ENCODE measurements at regions of chr3 and their contacts with region 1.

Region 1: GRCh38 chr3:45123030-45123429 is 23.1 kb downstream of the CDCP1 start:
- DNase-seq: peak; percentile 94
- H3K4me3 ChIP-seq: no peak overlapping the region
- H3K27ac ChIP-seq: peak overlapping the region; percentile 97
- H3K4me1 ChIP-seq: peaks cover 87% of the 10 kb centered on the region
- H3K27me3 ChIP-seq: no peaks in the 10 kb centered on the region
- CTCF ChIP-seq: no peak

Region 2: DNA sequence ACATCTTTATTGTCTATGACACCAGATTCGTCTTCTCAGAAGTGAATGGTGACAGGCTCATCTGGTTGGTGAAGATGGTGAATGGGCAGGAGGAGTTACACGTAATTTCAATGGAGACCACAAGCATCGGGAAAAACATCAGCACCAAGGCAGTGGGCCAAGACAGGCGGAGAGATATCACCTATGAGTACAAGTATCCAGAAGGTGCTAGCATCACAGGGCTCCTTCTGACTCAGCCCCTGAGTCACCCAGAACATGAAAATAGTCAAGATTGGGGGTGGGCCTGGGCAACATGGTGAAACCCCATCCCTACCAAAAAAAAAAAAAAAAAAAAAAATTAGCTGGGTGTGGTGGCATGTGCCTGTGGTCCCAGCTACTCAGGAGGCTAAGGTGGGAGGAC is 216.0 kb before region 1 on chr3:
- CTCF ChIA-PET with region 1: no interaction called
- dilution Hi-C with region 1: no loop called
- in situ Hi-C with region 1: no loop called
- intact Hi-C with region 1: no loop called
- DNase-seq: peak; percentile 92
- H3K4me3 ChIP-seq: no peak overlapping the region
- H3K27ac ChIP-seq: no peak overlapping the region
- H3K4me1 ChIP-seq: peaks cover 19% of the 10 kb centered on the region
- H3K27me3 ChIP-seq: no peaks in the 10 kb centered on the region
- CTCF ChIP-seq: no peak

Region 3: GRCh38 chr3:44995142-44995770 is 127.8 kb before region 1 on chr3:
- CTCF ChIA-PET with region 1: no interaction called
- dilution Hi-C with region 1: no loop called
- in situ Hi-C with region 1: no loop called
- intact Hi-C with region 1: no loop called
- DNase-seq: no peak
- H3K4me3 ChIP-seq: no peak overlapping the region
- H3K27ac ChIP-seq: peak overlapping the region; percentile 13
- H3K4me1 ChIP-seq: peaks cover 49% of the 10 kb centered on the region
- H3K27me3 ChIP-seq: no peaks in the 10 kb centered on the region
- CTCF ChIP-seq: no peak

Region 4: DNA sequence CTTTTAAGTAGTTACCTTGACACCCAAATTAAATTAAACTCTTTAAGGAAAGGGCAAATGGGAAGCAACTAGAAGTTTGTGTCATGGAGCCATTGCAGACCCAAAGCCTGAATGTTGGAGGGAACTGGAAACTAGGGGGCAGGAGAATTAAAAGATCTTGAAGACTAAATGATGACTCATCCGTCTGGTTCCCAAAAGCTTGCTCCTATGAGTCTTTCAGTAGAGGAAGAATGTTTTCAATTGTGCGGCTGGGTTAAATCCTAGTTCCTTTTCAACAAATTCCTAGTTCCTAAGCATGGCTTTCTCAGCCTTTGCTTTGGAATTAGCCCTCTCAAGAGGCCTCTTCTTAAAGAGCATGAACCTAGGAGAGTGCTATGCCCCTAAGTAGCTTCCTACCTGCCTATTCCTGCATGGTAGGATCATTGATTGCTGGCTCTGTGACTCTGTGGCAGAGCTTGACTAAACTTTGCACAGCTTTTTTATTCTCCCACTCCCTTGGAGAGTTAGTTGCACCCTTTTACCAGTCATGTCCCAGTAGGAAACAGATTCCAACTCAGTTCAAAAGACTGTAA is 79.2 kb before region 1 on chr3:
- CTCF ChIA-PET with region 1: interaction called, 10 read pairs
- dilution Hi-C with region 1: no loop called
- in situ Hi-C with region 1: no loop called
- intact Hi-C with region 1: loop called (anchors 5 kb)
- DNase-seq: peak; percentile 68
- H3K4me3 ChIP-seq: no peak overlapping the region
- H3K27ac ChIP-seq: no peak overlapping the region
- H3K4me1 ChIP-seq: peaks cover 13% of the 10 kb centered on the region
- H3K27me3 ChIP-seq: no peaks in the 10 kb centered on the region
- CTCF ChIP-seq: peak in 1 of 2 donors; percentile 19

Region 5: DNA sequence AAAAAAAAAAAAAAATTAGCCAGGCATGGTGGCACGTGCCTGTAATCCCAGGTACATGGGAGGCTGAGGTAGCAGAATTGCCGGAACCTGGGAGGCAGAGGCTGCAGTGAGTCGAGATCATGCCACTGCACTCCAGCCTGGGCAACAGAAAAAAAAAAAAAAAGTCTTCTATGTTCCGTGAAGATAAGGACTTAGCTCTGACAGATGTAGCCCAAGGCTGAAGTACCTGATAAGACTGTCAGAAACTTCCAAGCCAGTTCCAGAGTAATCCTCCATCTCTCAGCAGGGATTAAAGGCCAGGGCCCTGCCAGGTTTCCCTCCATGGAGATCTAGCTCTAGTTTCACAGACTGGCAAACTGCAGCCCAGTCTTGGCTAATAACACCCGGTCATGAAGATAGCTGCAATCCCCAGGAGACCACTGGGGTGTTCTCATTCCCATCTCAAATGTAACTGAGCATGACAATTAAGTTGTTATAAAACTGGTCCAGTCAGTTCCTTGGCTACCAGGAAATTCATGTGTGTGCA is 14.7 kb after region 1 on chr3:
- CTCF ChIA-PET with region 1: interaction called, 3 read pairs
- dilution Hi-C with region 1: no loop called
- in situ Hi-C with region 1: no loop called
- intact Hi-C with region 1: loop called (anchors 1 kb)
- DNase-seq: no peak
- H3K4me3 ChIP-seq: no peak overlapping the region
- H3K27ac ChIP-seq: peak overlapping the region; percentile 82
- H3K4me1 ChIP-seq: peaks cover 89% of the 10 kb centered on the region
- H3K27me3 ChIP-seq: no peaks in the 10 kb centered on the region
- CTCF ChIP-seq: no peak

Region 6: GRCh38 chr3:45154641-45155147 is 31.7 kb after region 1 on chr3:
- CTCF ChIA-PET with region 1: interaction called, 3 read pairs
- dilution Hi-C with region 1: loop called (anchors 5 kb)
- in situ Hi-C with region 1: no loop called
- intact Hi-C with region 1: no loop called
- DNase-seq: peak; percentile 95
- H3K4me3 ChIP-seq: no peak overlapping the region
- H3K27ac ChIP-seq: peak overlapping the region; percentile 50
- H3K4me1 ChIP-seq: peaks cover 23% of the 10 kb centered on the region
- H3K27me3 ChIP-seq: no peaks in the 10 kb centered on the region
- CTCF ChIP-seq: no peak

Region 7: GRCh38 chr3:45199837-45200648 is 77.0 kb after region 1 on chr3:
- CTCF ChIA-PET with region 1: no interaction called
- dilution Hi-C with region 1: no loop called
- in situ Hi-C with region 1: no loop called
- intact Hi-C with region 1: loop called (anchors 1 kb)
- DNase-seq: peak; percentile 99
- H3K4me3 ChIP-seq: no peak overlapping the region
- H3K27ac ChIP-seq: peak overlapping the region; percentile 90
- H3K4me1 ChIP-seq: peaks cover 40% of the 10 kb centered on the region
- H3K27me3 ChIP-seq: no peaks in the 10 kb centered on the region
- CTCF ChIP-seq: no peak

Region 8: GRCh38 chr3:45499529-45499928 is 376.5 kb after region 1 on chr3:
- CTCF ChIA-PET with region 1: no interaction called
- dilution Hi-C with region 1: no loop called
- in situ Hi-C with region 1: no loop called
- intact Hi-C with region 1: loop called (anchors 10 kb)
- DNase-seq: peak; percentile 30
- H3K4me3 ChIP-seq: no peak overlapping the region
- H3K27ac ChIP-seq: no peak overlapping the region
- H3K4me1 ChIP-seq: no peaks in the 10 kb centered on the region
- H3K27me3 ChIP-seq: no peaks in the 10 kb centered on the region
- CTCF ChIP-seq: peak; percentile 51 to 53